ENCODE measurements at regions of chrX and their contacts with region 1.

Region 1: GRCh38 chrX:106481341-106481740 is 130.4 kb upstream of the RADX start:
- DNase-seq: no peak
- H3K4me3 ChIP-seq: no peak overlapping the region
- H3K27ac ChIP-seq: no peak overlapping the region
- H3K4me1 ChIP-seq: no peaks in the 10 kb centered on the region
- H3K27me3 ChIP-seq: no peaks in the 10 kb centered on the region
- CTCF ChIP-seq: peak; percentile 20 to 78 (median 76)

Region 2: DNA sequence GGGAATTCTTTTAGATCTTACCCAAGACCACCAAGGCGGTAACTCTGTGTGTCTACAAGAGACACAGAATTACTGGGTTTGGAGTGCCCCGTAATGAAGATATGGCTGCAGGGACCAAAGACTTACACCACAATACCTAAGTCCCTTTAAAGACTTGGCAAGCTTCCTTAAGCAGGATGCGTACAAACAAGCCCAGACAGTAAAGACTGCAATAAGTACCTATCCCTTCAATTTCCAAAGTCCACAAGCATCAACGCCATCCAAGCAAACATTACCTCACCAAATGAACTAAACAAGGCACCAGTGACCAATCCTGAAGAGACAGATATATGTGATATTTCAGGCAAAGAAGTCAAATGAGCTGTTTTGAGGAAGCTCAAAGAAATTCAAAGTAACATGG is 202.9 kb after region 1 on chrX:
- intact Hi-C with region 1: no loop called
- DNase-seq: no peak
- H3K4me3 ChIP-seq: no peak overlapping the region
- H3K27ac ChIP-seq: no peak overlapping the region
- H3K4me1 ChIP-seq: no peaks in the 10 kb centered on the region
- H3K27me3 ChIP-seq: no peaks in the 10 kb centered on the region
- CTCF ChIP-seq: no peak

Region 3: GRCh38 chrX:106791495-106791894 is 310.2 kb after region 1 on chrX:
- intact Hi-C with region 1: loop called (anchors 10 kb)
- DNase-seq: no peak
- H3K4me3 ChIP-seq: no peak overlapping the region
- H3K27ac ChIP-seq: no peak overlapping the region
- H3K4me1 ChIP-seq: no peaks in the 10 kb centered on the region
- H3K27me3 ChIP-seq: no peaks in the 10 kb centered on the region
- CTCF ChIP-seq: peak in 1 of 3 experiments; percentile 34

Measured in ascending aorta (tissue), 2 donors.